ENCODE measurements at regions of chr9 and their contacts with region 1.

Region 1: GRCh38 chr9:92438900-92439526 is 14.7 kb upstream of the OMD start:
- H3K4me3 Mint-ChIP-seq: peak overlapping the region; percentile 5
- H3K27ac Mint-ChIP-seq: peak overlapping the region; percentile 5
- H3K4me1 Mint-ChIP-seq: no peaks in the 10 kb centered on the region
- H3K27me3 Mint-ChIP-seq: no peaks in the 10 kb centered on the region

Region 2: DNA sequence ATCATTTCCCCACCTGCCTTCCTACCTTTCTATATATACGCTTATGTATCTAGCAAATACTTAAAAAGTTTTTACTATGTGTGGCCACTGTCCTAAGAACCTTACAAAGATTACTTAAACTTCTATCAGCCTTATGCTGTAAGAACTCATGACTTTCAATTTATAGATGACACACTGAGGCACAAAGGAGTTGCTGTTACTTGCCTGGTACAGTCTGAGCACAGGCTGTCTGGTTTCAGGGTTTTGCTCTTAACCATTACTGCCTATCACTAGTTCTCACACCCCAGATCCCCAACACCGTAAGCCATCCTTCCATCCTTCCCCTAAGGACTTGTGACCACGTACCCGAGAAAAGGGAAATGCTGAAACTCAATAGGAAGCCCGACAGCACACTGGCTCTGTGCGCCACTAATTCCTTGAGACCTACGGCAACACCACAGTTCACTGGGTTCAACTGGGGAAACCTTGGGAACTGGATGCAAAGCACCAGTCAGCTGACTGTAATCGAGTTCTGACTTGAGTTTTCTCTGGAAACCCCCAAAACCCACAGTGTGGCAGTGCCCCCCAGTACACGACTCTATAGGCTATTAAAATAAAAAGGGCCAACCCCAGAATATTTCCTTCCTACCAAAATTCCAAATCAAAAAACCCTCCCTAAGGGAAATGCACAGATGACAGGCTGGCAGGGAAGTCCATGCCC is 1133.3 kb before region 1 on chr9:
- intact Hi-C with region 1: no loop called
- H3K4me3 Mint-ChIP-seq: no peak overlapping the region
- H3K27ac Mint-ChIP-seq: peak overlapping the region; percentile 67
- H3K4me1 Mint-ChIP-seq: peaks cover 26% of the 10 kb centered on the region
- H3K27me3 Mint-ChIP-seq: no peaks in the 10 kb centered on the region

Region 3: GRCh38 chr9:92342825-92343488 is 96.1 kb before region 1 on chr9:
- intact Hi-C with region 1: loop called (anchors 5 kb)
- H3K4me3 Mint-ChIP-seq: no peak overlapping the region
- H3K27ac Mint-ChIP-seq: no peak overlapping the region
- H3K4me1 Mint-ChIP-seq: no peaks in the 10 kb centered on the region
- H3K27me3 Mint-ChIP-seq: no peaks in the 10 kb centered on the region

Region 4: GRCh38 chr9:92455217-92455616 is 16.2 kb after region 1 on chr9:
- intact Hi-C with region 1: no loop called
- H3K4me3 Mint-ChIP-seq: no peak overlapping the region
- H3K27ac Mint-ChIP-seq: no peak overlapping the region
- H3K4me1 Mint-ChIP-seq: no peaks in the 10 kb centered on the region
- H3K27me3 Mint-ChIP-seq: no peaks in the 10 kb centered on the region

Region 5: DNA sequence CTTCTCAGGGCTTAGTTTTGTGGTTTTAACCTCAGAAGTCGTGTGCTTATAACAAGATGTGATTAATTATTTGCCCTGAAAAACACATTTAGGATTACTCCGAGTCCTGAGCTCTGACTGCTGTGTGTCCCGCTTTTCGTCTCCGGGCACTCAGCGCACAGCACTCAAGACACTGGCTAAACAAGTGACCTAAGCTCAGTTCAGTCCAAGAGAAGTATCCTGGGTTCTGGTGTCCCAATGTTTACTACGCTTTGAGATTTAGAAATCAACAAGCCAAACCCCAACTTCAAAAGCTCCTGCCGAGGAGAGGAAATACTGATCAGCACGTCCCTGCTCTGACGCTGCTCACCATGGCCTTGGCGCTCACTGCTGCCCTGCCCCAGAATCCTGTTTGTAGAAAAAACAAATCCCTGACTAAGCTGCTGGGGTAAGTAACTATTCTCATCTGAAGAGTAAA is 177.7 kb after region 1 on chr9:
- intact Hi-C with region 1: no loop called
- H3K4me3 Mint-ChIP-seq: no peak overlapping the region
- H3K27ac Mint-ChIP-seq: no peak overlapping the region
- H3K4me1 Mint-ChIP-seq: no peaks in the 10 kb centered on the region
- H3K27me3 Mint-ChIP-seq: no peaks in the 10 kb centered on the region

Measured in dendritic cell treated with granulocyte-macrophage colony-stimulating factor and Interleukin-4, amounts not matched to agents 40 ng/mL and 50 ng/mL, for 4 days (primary cell).